ENCODE measurements at regions of chr3 and their contacts with region 1.

Region 1: DNA sequence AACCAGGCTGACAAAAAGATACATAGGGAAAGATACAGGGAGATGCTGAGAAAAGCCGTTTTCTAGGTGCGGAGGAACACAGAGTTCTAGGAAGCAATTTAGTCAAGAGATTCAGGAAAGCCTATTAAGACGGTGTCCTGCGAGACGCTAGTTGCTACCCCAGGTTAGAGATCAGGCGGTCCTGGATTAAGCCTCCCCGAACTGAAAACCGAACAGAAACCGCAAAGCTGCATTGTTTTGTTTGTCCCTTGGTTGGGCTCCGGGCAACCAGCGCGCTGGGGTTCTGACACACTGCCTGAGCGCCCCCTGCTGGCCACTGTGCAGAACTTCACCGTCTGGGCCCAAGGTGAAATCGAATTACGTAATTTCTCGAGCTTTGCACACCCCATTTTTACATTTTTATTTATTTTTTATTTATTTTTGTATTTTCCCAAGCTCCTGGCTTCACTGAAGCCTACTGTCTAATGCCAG is 37.3 kb upstream of the NDUFB4 start:
- DNase-seq: peak; percentile 78 to 87
- H3K4me3 ChIP-seq: peak overlapping the region; percentile 57
- H3K27ac ChIP-seq: no peak overlapping the region
- H3K4me1 ChIP-seq: peaks cover 15% of the 10 kb centered on the region
- H3K27me3 ChIP-seq: no peaks in the 10 kb centered on the region
- CTCF ChIP-seq: peak; percentile 98

Region 2: DNA sequence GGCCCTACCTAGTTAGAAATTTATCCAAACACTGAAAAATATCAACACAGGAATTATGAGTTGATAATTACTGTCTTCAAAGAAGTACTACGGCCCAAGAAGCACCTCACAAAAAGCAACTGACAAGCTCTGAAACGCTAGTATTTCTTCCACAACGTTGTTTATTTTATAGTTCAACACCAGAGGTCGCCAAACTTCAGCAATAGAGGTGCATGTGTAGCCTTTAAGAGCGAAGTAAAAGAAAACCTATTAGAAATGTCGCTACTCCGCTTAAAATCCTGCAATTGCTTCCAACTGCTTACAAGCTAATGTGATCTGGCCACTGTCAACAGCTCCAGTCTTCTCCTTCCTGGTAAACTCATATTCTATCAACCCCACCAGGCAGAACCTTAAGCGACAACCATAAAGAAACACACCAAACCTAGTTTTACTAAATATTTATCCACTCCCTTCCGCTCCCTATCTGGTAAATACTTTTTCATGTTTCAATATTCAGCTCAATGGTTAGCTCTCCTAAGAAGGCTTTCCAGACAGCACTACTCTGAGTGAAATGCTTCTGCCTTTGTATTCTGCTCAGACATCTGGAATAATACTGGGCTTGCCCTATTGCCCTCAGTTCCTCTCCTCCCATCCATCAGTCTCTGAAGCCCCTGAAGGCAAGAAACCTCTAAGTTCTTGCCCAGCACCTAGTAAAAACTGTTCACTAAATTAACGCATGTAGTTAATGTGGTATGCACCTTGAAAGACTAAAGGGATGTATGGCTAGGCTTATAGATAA is 666.7 kb before region 1 on chr3:
- CTCF ChIA-PET with region 1: no interaction called
- POLR2A ChIA-PET with region 1: no interaction called
- intact Hi-C with region 1: loop called (anchors 1 kb)
- DNase-seq: peak in 1 of 2 experiments; percentile 10
- H3K4me3 ChIP-seq: no peak overlapping the region
- H3K27ac ChIP-seq: no peak overlapping the region
- H3K4me1 ChIP-seq: no peaks in the 10 kb centered on the region
- H3K27me3 ChIP-seq: no peaks in the 10 kb centered on the region
- CTCF ChIP-seq: peak; percentile 70

Region 3: DNA sequence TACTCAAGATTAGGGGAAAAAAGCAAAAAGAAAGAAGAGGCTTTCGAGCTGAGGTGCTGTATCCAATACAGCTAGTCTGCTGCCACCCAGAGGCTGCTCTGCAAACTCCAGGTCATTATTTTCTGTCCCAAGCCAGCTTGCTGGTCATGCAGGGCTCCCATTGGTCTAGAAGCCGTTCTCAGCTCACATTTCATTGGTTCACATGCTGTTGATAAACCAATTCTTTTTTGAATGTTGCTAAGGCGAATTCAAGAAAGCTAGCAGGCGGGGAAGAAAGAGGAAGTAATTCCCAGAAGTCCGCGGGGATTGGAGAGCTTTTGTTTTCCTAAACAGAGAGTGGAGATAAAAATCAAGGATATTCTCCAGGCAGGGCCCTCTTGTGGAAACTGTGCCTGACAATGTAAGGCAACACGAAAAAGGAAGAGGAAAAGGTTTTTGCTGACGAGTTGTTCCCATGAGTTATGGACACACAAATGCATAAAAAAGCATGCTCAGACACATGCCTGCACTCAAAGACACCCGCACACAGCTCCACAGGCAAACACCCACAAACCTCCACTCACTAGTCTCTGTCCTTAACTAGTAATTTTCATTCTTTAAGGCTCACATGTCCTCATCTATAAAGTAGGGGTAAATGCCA is 141.4 kb before region 1 on chr3:
- CTCF ChIA-PET with region 1: interaction called, 29 read pairs
- POLR2A ChIA-PET with region 1: interaction called, 8 read pairs
- intact Hi-C with region 1: loop called (anchors 1 kb)
- DNase-seq: peak; percentile 91 to 92
- H3K4me3 ChIP-seq: peak overlapping the region; percentile 34; the same call in 1 of the 2 replicates
- H3K27ac ChIP-seq: peak overlapping the region; percentile 32; the same call in 1 of the 2 replicates
- H3K4me1 ChIP-seq: peaks cover 11% of the 10 kb centered on the region
- H3K27me3 ChIP-seq: no peaks in the 10 kb centered on the region
- CTCF ChIP-seq: peak; percentile 85

Region 4: GRCh38 chr3:120469447-120469846 is 89.4 kb before region 1 on chr3:
- CTCF ChIA-PET with region 1: no interaction called
- POLR2A ChIA-PET with region 1: interaction called, 3 read pairs
- intact Hi-C with region 1: loop called (anchors 1 kb)
- DNase-seq: peak; percentile 80 to 95
- H3K4me3 ChIP-seq: peak overlapping the region; percentile 36; the same call in 1 of the 2 replicates
- H3K27ac ChIP-seq: peak overlapping the region; percentile 99
- H3K4me1 ChIP-seq: peaks cover 50% of the 10 kb centered on the region
- H3K27me3 ChIP-seq: no peaks in the 10 kb centered on the region
- CTCF ChIP-seq: no peak

Region 5: DNA sequence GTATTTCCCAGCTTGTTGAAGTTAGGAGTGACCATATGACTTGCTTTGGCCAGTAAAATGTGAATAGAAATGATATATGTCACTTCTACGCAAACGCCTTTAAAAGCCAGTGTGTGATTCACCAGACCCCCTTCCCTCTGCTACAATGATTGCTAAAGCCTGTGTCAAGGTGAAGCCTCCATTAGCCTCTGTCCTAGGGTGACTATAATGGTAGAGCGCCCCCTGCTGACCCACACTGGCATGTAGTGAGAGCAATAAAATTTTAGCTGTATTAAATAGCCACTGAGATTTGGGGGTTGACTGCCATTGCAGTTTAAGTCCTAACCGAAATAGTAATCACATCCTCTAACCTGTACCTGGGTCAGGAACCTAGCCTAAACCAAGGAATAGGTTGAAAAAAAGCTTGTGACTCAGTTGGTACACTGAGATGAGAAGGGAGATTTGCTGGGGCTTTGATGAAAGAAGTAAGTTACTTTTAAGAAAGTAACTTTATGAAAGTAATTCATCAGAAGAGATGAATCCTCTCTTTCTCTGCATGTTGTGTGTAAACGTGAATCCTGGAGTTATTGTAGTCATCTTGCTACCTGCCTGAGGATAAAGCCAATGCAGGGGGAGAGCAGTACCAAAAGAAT is 236.3 kb after region 1 on chr3:
- CTCF ChIA-PET with region 1: interaction called, 11 read pairs
- POLR2A ChIA-PET with region 1: no interaction called
- intact Hi-C with region 1: loop called (anchors 1 kb)
- DNase-seq: peak in 1 of 2 experiments; percentile 66
- H3K4me3 ChIP-seq: no peak overlapping the region
- H3K27ac ChIP-seq: no peak overlapping the region
- H3K4me1 ChIP-seq: no peaks in the 10 kb centered on the region
- H3K27me3 ChIP-seq: no peaks in the 10 kb centered on the region
- CTCF ChIP-seq: peak; percentile 90

Measured in PC-9 (cell line).